SK-N-SH (cell line): ENCODE measurements at regions of chr3 and their contacts with region 1.

Region 1: GRCh38 chr3:46695177-46695961 is 1.9 kb upstream of the ALS2CL start:
- DNase-seq: peak; percentile 47
- H3K4me3 ChIP-seq: no peak overlapping the region
- H3K27ac ChIP-seq: no peak overlapping the region; a peak in 1 of 4 replicates
- H3K4me1 ChIP-seq: peaks cover 0 to 30% of the 10 kb centered on the region in 2 experiments; a peak in 1 of 4 replicates
- H3K27me3 ChIP-seq: no peaks in the 10 kb centered on the region; the same call in 1 of the 2 replicates
- CTCF ChIP-seq: no peak; the same call in 1 of the 2 replicates
- EP300 ChIP-seq: no peak
- RAD21 ChIP-seq: peak; percentile 27

Region 2: GRCh38 chr3:46593274-46593862 is 102.0 kb before region 1 on chr3:
- CTCF ChIA-PET with region 1: no interaction called
- POLR2A ChIA-PET with region 1: no interaction called
- DNase-seq: no peak
- H3K4me3 ChIP-seq: no peak overlapping the region
- H3K27ac ChIP-seq: no peak overlapping the region
- H3K4me1 ChIP-seq: no peaks in the 10 kb centered on the region
- H3K27me3 ChIP-seq: no peaks in the 10 kb centered on the region
- CTCF ChIP-seq: no peak
- EP300 ChIP-seq: no peak
- RAD21 ChIP-seq: no peak

Region 3: DNA sequence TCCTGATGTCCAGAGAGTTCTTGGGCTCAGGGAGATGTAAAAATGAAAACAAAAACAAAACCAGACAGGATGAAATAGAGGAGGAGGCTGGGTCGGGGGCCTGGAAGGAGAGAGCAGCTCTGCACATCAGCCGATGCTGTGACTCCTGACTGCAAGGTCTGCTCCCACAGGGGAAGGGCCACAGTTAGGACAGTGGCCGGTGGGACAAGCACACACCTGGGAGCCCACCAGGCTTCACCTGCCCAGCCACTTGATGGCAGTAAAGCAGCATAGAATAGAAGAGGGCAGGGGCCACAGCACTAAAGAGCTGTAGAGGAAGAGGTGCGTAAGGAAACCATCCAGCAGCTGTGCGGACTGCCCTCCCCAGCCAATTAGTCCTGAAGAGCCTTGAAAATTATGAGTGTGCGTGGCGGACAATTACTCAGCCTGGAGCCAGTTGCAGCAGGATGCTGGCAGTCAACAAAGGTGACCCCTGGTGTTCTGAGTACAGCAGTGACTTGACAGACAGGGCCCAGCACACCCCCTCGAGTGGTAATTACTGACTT is 31.7 kb before region 1 on chr3:
- CTCF ChIA-PET with region 1: interaction called, 10 read pairs
- POLR2A ChIA-PET with region 1: no interaction called
- DNase-seq: peak; percentile 59
- H3K4me3 ChIP-seq: no peak overlapping the region
- H3K27ac ChIP-seq: peak overlapping the region in 1 of 2 experiments; percentile 16; a peak in 1 of 4 replicates
- H3K4me1 ChIP-seq: peaks cover 0 to 72% of the 10 kb centered on the region in 2 experiments; a peak in 1 of 4 replicates
- H3K27me3 ChIP-seq: no peaks in the 10 kb centered on the region
- CTCF ChIP-seq: no peak
- EP300 ChIP-seq: no peak
- RAD21 ChIP-seq: peak; percentile 51

Region 4: DNA sequence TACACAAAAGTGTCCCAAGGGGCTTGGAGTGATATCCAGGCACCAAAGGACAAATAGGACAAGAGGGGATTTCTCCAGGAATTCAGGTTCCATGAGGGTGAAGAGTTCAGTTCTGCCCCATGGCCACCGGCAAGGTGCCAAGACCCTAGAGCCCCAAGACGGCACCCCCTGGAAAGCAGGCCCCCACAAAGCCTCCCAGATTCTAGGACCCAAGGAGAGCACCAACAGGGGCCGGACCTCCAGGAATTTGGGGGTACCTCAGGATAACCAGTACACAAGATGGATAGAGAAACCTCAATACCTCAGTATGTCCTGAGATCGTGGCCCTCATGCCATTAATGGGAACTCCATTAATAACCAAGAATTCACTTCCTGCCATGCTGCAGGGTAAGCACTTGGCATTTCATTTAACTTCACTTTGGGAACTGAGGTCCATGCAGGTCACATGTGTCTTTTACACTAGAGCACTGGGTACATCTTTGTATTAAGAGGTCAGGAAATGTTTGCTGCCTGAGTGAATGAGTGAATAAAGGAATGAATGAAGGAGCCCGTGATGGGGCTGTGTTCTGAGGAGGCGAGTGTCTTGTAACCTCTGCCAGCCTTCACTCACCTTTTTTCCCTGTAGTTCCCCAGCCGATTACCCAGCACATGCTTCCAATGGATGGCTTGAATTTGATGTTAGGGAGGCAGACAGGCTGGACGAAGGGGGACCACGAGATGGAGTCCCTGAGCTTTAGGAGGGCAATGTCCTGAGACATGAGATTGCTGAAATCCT is 37.8 kb after region 1 on chr3:
- CTCF ChIA-PET with region 1: no interaction called
- POLR2A ChIA-PET with region 1: no interaction called
- DNase-seq: no peak
- H3K4me3 ChIP-seq: no peak overlapping the region
- H3K27ac ChIP-seq: no peak overlapping the region
- H3K4me1 ChIP-seq: peaks cover 0 to 3% of the 10 kb centered on the region in 2 experiments; a peak in 2 of 4 replicates
- H3K27me3 ChIP-seq: no peaks in the 10 kb centered on the region; the same call in 1 of the 2 replicates
- CTCF ChIP-seq: no peak
- EP300 ChIP-seq: no peak
- RAD21 ChIP-seq: no peak